ENCODE measurements at regions of chr2 and their contacts with region 1.

Region 1: DNA sequence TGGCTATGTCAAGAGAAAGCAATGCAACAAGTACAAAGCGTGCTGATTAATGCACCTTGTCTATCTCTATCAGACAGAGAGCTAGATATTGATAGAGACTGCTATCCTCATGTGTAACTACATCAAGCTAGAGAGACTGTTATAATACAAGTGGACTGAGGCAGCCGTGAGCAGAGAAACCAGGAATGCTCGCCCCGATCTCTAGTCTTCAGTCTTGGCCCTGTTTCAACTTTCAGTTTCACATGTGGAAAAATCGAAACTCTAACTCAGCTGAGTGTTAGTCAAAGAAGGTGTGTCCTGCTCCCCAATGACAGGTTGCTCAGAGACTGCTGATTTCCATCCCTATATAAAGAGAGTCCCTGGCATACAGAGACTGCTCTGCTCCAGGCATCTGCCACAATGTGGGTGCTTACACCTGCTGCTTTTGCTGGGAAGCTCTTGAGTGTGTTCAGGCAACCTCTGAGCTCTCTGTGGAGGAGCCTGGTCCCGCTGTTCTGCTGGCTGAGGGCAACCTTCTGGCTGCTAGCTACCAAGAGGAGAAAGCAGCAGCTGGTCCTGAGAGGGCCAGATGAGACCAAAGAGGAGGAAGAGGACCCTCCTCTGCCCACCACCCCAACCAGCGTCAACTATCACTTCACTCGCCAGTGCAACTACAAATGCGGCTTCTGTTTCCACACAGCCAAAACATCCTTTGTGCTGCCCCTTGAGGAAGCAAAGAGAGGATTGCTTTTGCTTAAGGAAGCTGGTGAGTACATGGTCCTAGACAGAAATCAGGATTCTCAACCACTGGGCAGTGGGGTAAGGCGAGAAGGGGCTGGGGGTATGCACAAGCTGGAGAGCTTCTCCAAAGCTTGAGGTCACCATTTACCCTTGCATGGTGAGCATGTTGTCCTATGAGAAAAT is at the start of gene RSAD2:
- DNase-seq: peak; percentile 46
- H3K4me3 Mint-ChIP-seq: peak within 1 kb of the TSS; percentile 86
- H3K27ac Mint-ChIP-seq: peak within 1 kb of the TSS; percentile 80
- H3K4me1 Mint-ChIP-seq: peaks cover 83% of the 10 kb centered on the region
- H3K27me3 Mint-ChIP-seq: no peaks in the 10 kb centered on the region
- total RNA-seq, gene RSAD2: 2.2 and 2.4 TPM in 2 replicates

Region 2: DNA sequence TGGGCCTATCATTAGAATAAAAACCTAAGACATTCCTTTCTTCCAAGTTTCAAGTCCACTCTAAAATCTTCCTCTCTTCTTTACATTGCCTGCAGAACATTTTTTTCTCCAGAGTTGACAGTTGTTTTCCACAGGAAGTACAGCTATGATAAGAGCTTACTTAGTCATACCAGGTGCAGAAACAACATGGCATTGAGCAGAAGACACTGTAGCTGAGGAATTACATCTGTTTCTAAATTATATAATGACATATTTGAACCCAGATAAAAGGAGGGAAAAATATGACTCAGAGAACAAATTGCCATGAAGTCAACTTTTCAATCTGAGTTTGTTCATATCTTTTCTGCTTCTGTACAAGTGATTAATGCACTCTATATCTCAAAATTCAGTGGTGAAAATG is 42.2 kb before region 1 on chr2:
- intact Hi-C with region 1: loop called (anchors 1 kb)
- DNase-seq: no peak
- H3K4me3 Mint-ChIP-seq: no peak overlapping the region
- H3K27ac Mint-ChIP-seq: peak overlapping the region; percentile 36
- H3K4me1 Mint-ChIP-seq: peaks cover 33% of the 10 kb centered on the region
- H3K27me3 Mint-ChIP-seq: no peaks in the 10 kb centered on the region

Region 3: DNA sequence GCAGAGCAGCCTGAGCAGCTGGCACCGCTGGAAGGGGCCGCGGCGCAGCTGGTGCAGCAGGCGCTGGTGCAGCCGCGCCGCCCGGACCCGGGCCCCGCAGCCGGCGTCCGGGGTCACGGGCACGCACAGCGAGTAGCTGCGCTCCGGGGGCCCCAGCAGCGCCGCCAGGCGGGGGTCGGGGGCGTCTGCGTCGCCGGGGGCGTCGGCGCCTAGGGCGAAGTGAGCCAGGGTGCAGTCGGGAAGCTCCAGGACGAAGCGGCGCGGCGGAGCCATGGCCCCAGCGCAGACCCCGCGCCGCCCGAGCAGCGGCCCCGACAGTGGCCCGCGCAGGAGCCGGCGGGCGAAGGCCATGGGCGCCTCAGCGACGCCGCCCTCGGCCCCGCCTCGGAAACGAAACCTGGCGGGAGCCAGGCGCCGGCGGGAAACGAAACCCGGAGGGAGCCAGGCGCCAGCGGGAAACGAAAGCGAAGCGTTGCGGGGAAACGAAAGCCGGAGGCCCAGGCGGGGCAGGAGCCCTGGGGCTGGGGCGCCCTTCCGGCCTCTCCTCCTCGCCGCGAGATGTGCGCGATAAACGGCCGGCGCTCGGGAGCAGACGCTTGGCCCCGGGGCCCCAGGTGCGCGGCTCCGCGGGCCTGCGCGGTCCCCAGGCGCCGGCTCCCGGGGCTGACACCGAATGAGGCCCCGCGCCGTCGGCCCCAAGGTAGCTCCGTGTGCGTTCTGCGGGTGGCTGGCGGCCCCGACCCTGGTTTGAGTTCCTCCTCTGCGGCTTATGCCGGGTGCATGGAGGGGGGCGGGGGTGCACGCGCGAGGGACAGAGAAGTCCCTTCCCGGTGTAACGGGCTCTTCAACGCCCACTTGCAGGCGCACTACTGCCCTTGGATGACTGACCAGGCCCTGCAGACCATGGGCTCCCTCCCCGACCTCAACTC is 12.0 kb before region 1 on chr2 and contains the start of gene CMPK2:
- intact Hi-C with region 1: loop called (anchors 1 kb)
- DNase-seq: peak; percentile 90
- H3K4me3 Mint-ChIP-seq: peak within 1 kb of the TSS; percentile 99
- H3K27ac Mint-ChIP-seq: peak within 1 kb of the TSS; percentile 99
- H3K4me1 Mint-ChIP-seq: peaks cover 57% of the 10 kb centered on the region
- H3K27me3 Mint-ChIP-seq: no peaks in the 10 kb centered on the region
- total RNA-seq, gene CMPK2: 4.1 and 7.4 TPM in 2 replicates

Region 4: DNA sequence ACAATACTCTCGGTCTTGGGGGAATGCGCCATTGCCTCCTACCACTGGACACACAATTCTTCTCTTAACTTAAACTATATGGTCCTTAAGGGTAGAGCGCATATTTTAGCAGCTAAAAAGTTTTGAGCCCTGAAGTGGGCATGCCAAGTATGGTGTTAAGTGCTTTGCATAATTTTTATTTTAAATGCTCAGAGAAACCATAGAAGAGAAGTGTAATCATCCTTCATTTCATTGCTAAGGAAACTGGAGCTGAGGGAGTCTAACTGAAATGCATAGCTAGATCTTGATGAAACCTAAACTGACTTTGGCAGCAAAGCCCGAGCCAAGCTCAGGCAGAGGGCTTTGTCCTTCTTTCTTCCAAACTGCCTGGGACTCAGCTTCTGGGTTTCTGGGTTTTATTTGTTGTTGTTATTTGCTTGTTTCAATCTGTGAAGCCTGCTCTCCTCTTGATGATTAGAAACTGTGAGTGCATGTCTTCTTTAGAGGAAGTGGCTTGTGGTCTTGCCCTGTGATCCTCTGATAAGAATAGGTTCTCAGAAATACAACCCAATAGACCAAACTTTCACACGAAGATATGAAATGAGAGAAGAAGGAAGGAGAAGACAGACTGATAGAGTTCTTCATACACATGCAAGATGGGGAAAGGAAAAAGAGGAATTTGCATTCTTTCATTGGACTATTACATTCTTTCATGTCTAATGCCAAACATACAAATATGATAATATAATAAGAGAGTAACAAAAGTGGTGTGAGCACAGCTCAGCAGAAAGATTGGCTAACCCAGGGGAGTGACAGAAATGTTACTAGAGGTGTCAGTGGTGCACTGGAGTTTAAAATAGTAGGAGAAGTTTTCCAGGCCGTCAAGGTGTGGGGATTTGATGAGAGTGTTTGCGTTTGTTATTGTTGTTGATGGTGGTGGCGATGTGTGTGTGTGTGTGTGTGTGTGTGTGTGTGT is 32.1 kb after region 1 on chr2:
- intact Hi-C with region 1: loop called (anchors 1 kb)
- DNase-seq: peak; percentile 59
- H3K4me3 Mint-ChIP-seq: peak overlapping the region; percentile 66
- H3K27ac Mint-ChIP-seq: peak overlapping the region; percentile 83
- H3K4me1 Mint-ChIP-seq: peaks cover 90% of the 10 kb centered on the region
- H3K27me3 Mint-ChIP-seq: peaks cover 7% of the 10 kb centered on the region

Region 5: GRCh38 chr2:6917071-6917760 is 39.6 kb after region 1 on chr2 and contains the start of gene RNF144A:
- intact Hi-C with region 1: loop called (anchors 1 kb)
- DNase-seq: peak; percentile 71
- H3K4me3 Mint-ChIP-seq: peak within 1 kb of the TSS; percentile 74
- H3K27ac Mint-ChIP-seq: peak within 1 kb of the TSS; percentile 59
- H3K4me1 Mint-ChIP-seq: peaks cover 52% of the 10 kb centered on the region
- H3K27me3 Mint-ChIP-seq: peaks cover 16% of the 10 kb centered on the region
- total RNA-seq, gene RNF144A: 14.4 and 16.6 TPM in 2 replicates

Region 6: GRCh38 chr2:6945087-6945813 is 67.6 kb after region 1 on chr2:
- intact Hi-C with region 1: no loop called
- DNase-seq: no peak
- H3K4me3 Mint-ChIP-seq: peak overlapping the region; percentile 23
- H3K27ac Mint-ChIP-seq: peak overlapping the region; percentile 80
- H3K4me1 Mint-ChIP-seq: peaks cover 46% of the 10 kb centered on the region
- H3K27me3 Mint-ChIP-seq: no peaks in the 10 kb centered on the region

Region 7: DNA sequence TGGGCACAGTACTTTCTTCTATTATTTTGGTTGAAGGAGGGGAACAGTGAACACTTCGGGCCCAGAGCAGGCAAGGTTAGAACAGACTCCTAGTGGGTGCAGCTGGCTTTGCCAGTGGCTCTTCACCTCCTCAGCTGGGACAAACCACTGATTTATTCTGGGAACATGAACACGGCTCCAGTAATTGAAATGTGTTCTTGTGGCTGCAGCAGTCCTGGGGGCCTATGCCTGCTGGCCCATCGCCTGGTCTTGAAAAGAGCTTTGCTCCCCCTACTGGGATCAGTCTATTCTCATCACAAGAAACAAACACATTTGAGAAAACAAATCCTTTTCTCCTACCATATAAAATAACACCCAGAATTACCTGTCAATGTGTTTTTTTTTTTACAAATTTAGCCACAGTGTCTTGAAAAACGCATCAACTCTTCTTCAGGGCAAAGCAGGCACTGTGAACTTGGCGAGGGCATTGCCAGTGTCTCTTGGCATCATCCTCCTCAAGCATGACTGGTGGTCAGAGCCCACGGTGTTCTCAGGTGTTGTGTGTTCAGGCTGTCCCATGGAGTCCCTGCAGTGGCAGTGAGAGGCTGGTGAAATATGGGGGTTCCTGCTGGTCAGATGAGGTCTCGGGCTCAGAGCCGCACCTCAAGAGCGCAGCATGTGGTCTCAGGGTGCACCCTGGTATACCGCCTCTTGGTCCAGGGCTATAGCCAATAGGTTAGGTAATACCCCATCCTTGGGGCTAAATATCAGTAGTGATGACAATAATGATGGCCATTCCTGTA is 90.9 kb after region 1 on chr2:
- intact Hi-C with region 1: no loop called
- DNase-seq: no peak
- H3K4me3 Mint-ChIP-seq: no peak overlapping the region
- H3K27ac Mint-ChIP-seq: no peak overlapping the region
- H3K4me1 Mint-ChIP-seq: no peaks in the 10 kb centered on the region
- H3K27me3 Mint-ChIP-seq: no peaks in the 10 kb centered on the region